Kidney (tissue), 22 donors: ENCODE measurements at regions of chr4 and their contacts with region 1.

Region 1: GRCh38 chr4:78864405-78865024 is 74.7 kb downstream of the PAQR3 start:
- DNase-seq: peak in 2 of 5 donors; percentile 78 to 91
- H3K4me3 ChIP-seq: no peak overlapping the region
- H3K27ac ChIP-seq: no peak overlapping the region
- H3K4me1 ChIP-seq: no peaks in the 10 kb centered on the region
- H3K27me3 ChIP-seq: no peaks in the 10 kb centered on the region
- CTCF ChIP-seq: peak; percentile 74

Region 2: DNA sequence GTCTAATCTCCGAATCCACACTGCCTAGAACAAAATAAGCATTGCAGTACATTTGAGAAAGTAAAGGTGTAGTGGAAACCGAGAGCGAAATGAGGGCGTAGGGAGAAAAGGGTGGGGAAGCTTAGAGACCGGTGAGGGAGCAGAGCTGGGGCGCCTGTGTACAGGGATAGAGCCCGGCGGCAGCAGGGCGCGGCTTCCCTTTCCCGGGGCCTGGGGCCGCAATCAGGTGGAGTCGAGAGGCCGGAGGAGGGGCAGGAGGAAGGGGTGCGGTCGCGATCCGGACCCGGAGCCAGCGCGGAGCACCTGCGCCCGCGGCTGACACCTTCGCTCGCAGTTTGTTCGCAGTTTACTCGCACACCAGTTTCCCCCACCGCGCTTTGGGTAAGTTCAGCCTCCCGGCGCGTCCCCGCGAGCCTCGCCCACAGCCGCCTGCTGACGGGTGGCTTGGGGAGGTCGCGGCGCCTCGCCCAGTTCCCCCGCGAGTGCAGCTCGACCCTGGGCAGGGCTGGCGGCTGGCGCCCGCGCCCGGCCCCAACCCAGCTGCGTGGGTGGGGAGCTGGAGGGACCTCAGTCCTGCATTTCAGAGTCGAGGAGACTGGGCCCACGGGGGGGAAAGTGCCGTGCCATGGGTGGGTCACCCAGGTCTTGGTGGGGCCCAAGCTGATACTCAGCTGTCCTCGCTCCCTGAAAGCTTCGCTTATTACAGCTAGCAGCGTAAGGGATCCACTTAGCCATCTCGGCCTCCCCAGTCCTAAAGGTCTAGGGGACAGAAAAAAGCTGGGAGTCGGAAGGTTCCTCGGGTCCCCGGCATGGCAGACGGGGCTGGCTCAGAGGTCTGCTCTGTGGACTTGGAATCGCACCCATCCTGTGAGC is 312.8 kb before region 1 on chr4 and contains the start of gene ANXA3:
- intact Hi-C with region 1: no loop called
- DNase-seq: peak; percentile 50 to 84 (median 70)
- H3K4me3 ChIP-seq: peak within 1 kb of the TSS; percentile 40 to 63 (median 51)
- H3K27ac ChIP-seq: peak within 1 kb of the TSS; percentile 29 to 67
- H3K4me1 ChIP-seq: peaks cover 0 to 7% (median 0%) of the 10 kb centered on the region in 3 donors
- H3K27me3 ChIP-seq: peaks cover 2% of the 10 kb centered on the region
- CTCF ChIP-seq: no peak
- total RNA-seq, gene ANXA3: 79.9 TPM

Region 3: GRCh38 chr4:78612398-78613178 is 251.9 kb before region 1 on chr4:
- intact Hi-C with region 1: loop called (anchors 10 kb)
- DNase-seq: peak in 2 of 5 donors; percentile 46 to 61
- H3K4me3 ChIP-seq: no peak overlapping the region
- H3K27ac ChIP-seq: no peak overlapping the region
- H3K4me1 ChIP-seq: no peaks in the 10 kb centered on the region
- H3K27me3 ChIP-seq: no peaks in the 10 kb centered on the region
- CTCF ChIP-seq: peak; percentile 54